Activated CD4-positive, alpha-beta memory T cell treated with anti-CD3 and anti-CD28 coated beads, Interleukin-2, amount 10 ng/mL, durations not matched to agents 7 days and 5 days (primary cell): ENCODE measurements at regions of chr6 and their contacts with region 1.

Region 1: GRCh38 chr6:137866914-137867684 is at the start of gene TNFAIP3:
- DNase-seq: peak; percentile 95
- H3K4me3 Mint-ChIP-seq: peak within 1 kb of the TSS; percentile 87
- H3K27ac Mint-ChIP-seq: peak within 1 kb of the TSS; percentile 86
- H3K4me1 Mint-ChIP-seq: peaks cover 51% of the 10 kb centered on the region
- H3K27me3 Mint-ChIP-seq: no peaks in the 10 kb centered on the region
- total RNA-seq, gene TNFAIP3: 143 to 144 TPM

Region 2: GRCh38 chr6:137707590-137708360 is 159.3 kb before region 1 on chr6:
- CTCF ChIA-PET with region 1: interaction called, 53 read pairs
- POLR2A ChIA-PET with region 1: interaction called, 45 read pairs
- DNase-seq: peak; percentile 91
- H3K4me3 Mint-ChIP-seq: peak overlapping the region; percentile 59
- H3K27ac Mint-ChIP-seq: peak overlapping the region; percentile 86
- H3K4me1 Mint-ChIP-seq: peaks cover 71% of the 10 kb centered on the region
- H3K27me3 Mint-ChIP-seq: no peaks in the 10 kb centered on the region

Region 3: GRCh38 chr6:137791281-137792159 is 75.6 kb before region 1 on chr6:
- CTCF ChIA-PET with region 1: interaction called, 5 read pairs
- POLR2A ChIA-PET with region 1: interaction called, 13 read pairs
- DNase-seq: no peak
- H3K4me3 Mint-ChIP-seq: peak overlapping the region; percentile 60
- H3K27ac Mint-ChIP-seq: peak overlapping the region; percentile 23
- H3K4me1 Mint-ChIP-seq: peaks cover 60% of the 10 kb centered on the region
- H3K27me3 Mint-ChIP-seq: no peaks in the 10 kb centered on the region

Region 4: DNA sequence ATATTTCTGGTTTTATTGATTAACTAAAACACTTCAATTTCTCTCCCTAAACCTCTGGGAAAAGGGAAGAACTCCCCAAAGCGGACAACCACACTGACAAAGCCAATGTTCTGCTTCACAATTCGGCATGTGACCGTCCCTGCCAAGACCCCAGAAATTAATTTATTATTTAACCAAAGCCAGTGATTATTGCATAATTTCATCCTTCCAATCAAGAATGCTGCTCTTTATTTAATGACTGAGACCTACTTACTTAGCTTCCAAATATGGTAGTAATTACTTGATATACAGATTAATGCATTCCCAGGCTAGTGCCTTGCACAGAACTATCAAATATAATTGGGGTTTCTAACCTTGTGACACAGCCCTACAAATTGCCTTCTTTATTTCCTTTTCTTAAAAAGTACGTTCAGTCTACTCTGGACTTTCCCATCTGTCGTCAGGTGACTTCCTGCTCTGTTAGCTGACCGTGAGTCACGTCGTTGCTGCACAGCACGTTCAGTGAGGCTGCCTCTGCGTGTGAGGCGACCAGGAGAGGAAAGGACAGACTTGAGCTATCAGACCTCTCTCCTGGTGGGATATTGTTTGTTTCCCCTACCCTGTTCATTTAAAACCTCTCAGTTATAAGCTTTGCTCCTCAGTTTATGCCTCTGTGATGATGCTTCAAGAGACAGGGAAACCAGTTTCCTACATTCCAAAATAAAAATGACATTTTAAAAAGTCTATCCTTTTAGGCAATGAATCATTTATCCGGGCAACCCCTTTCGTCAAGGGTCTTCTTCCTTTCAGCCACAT is 55.8 kb before region 1 on chr6:
- CTCF ChIA-PET with region 1: interaction called, 10 read pairs
- POLR2A ChIA-PET with region 1: interaction called, 21 read pairs
- DNase-seq: peak; percentile 81
- H3K4me3 Mint-ChIP-seq: peak overlapping the region; percentile 16
- H3K27ac Mint-ChIP-seq: peak overlapping the region; percentile 74
- H3K4me1 Mint-ChIP-seq: peaks cover 38% of the 10 kb centered on the region
- H3K27me3 Mint-ChIP-seq: no peaks in the 10 kb centered on the region

Region 5: DNA sequence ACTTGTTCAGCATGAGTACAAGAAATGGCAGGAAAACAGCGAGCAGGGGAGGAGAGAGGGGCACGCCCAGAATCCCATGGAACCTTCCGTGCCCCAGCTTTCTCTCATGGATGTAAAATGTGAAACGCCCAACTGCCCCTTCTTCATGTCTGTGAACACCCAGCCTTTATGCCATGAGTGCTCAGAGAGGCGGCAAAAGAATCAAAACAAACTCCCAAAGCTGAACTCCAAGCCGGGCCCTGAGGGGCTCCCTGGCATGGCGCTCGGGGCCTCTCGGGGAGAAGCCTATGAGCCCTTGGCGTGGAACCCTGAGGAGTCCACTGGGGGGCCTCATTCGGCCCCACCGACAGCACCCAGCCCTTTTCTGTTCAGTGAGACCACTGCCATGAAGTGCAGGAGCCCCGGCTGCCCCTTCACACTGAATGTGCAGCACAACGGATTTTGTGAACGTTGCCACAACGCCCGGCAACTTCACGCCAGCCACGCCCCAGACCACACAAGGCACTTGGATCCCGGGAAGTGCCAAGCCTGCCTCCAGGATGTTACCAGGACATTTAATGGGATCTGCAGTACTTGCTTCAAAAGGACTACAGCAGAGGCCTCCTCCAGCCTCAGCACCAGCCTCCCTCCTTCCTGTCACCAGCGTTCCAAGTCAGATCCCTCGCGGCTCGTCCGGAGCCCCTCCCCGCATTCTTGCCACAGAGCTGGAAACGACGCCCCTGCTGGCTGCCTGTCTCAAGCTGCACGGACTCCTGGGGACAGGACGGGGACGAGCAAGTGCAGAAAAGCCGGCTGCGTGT is 11.6 kb after region 1 on chr6:
- CTCF ChIA-PET with region 1: interaction called, 68 read pairs
- POLR2A ChIA-PET with region 1: interaction called, 42 read pairs
- DNase-seq: no peak
- H3K4me3 Mint-ChIP-seq: no peak overlapping the region
- H3K27ac Mint-ChIP-seq: no peak overlapping the region
- H3K4me1 Mint-ChIP-seq: peaks cover 69% of the 10 kb centered on the region
- H3K27me3 Mint-ChIP-seq: no peaks in the 10 kb centered on the region

Region 6: DNA sequence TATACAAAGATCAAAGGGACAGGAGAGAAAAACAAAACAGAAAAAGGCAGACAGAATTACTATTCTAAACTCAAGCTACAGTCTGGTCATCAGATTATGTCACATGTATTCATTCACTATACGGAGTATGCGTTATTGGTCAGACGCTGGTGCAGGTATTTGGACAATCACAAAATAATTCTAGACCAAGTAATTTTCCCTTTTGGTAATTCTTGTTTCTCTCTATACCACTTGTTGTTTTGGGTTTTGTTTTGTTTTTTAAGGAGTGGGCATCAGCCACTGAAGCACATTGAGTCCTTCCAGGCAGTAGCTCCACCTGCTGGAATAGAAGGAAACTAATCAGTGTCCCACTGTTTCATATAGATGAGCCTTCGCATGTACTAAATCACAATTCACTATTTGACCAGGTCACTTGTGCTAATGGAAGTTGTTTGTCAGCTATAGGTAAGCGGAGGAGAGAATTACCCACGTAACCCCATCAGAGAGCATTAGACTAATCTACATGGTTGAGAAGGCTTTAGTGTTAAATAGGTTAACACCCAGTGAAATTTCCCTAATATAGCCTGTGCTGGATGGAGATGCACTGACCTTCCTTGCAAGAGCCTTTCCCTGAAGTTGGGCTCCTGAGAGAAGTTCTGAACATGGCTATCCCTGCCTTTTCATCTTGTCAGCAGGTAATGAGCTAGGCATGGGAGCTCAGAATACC is 77.8 kb after region 1 on chr6:
- CTCF ChIA-PET with region 1: interaction called, 182 read pairs
- POLR2A ChIA-PET with region 1: interaction called, 41 read pairs
- DNase-seq: no peak
- H3K4me3 Mint-ChIP-seq: no peak overlapping the region
- H3K27ac Mint-ChIP-seq: no peak overlapping the region
- H3K4me1 Mint-ChIP-seq: peaks cover 33% of the 10 kb centered on the region
- H3K27me3 Mint-ChIP-seq: no peaks in the 10 kb centered on the region

Region 7: GRCh38 chr6:138001750-138002349 is 134.8 kb after region 1 on chr6:
- CTCF ChIA-PET with region 1: interaction called, 55 read pairs
- POLR2A ChIA-PET with region 1: interaction called, 4 read pairs
- DNase-seq: peak; percentile 65
- H3K4me3 Mint-ChIP-seq: no peak overlapping the region
- H3K27ac Mint-ChIP-seq: no peak overlapping the region
- H3K4me1 Mint-ChIP-seq: peaks cover 12% of the 10 kb centered on the region
- H3K27me3 Mint-ChIP-seq: no peaks in the 10 kb centered on the region